ENCODE measurements at regions of chr14 and their contacts with region 1.

Region 1: DNA sequence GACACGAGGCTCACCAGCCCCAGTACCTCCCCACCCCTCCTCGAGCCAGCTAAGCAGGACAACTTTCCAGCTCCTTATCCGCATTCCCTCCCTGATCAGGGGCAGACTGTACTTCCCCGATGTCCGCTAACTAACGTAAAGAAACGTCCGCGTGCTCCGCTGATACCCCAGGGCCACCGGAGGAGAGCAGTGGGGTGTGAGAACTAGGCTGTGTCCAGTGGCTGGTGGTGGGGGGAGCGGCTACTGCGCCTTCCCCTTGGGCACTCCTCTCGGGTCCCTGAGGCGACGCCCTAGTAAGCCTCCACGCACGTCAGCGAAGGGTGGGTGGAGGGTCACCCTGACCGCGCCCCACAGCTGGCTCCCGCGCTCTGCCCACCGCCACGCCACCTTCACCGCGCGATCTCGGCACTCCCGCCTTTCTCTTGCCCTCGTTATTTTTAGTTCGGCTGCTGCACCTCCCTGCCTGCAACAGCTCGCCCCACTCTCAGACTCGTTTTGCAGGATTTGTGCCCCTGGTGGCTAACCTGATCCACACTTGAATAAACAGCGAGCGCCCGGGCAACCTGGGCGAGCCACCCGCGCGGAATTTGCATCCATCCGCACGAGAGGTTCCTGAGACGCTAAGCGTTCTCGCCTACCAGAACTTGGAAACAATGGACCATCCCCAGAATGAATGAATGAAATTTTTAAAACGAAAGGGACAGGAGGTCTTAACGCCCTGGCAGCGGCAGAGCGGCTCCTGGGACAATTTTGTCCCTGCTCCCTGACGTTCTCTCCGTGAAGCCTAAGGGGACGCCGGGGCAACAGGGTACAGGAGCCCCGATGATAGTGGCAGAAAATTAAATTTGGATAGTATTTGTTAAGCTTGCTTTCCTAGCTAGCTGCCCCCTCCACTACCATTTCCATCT is 6.9 kb upstream of the BMP4 start:
- DNase-seq: peak; percentile 34 to 53
- ATAC-seq: peak; percentile 93

Region 2: DNA sequence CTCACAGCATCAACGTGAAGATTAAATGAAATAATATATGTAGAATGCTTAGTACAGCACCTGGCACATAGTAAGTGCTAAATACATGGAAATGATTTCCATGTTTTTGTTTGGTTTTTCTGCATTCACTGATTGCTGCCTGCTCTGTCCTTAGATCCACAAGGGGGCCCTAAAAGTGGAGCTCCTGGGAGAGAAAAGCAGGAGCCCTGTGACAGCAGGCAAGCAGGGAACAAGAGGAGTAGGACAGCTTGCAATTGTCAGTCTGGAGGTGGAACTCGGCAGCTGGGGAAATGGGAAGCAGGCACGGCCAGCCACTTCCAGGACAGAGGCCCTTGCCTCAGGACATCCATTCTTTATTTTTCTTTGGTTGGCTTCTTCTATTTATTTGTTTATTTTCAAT is 299.9 kb before region 1 on chr14:
- intact Hi-C with region 1: no loop called
- DNase-seq: peak in 1 of 2 donors; percentile 6
- ATAC-seq: peak; percentile 45

Region 3: DNA sequence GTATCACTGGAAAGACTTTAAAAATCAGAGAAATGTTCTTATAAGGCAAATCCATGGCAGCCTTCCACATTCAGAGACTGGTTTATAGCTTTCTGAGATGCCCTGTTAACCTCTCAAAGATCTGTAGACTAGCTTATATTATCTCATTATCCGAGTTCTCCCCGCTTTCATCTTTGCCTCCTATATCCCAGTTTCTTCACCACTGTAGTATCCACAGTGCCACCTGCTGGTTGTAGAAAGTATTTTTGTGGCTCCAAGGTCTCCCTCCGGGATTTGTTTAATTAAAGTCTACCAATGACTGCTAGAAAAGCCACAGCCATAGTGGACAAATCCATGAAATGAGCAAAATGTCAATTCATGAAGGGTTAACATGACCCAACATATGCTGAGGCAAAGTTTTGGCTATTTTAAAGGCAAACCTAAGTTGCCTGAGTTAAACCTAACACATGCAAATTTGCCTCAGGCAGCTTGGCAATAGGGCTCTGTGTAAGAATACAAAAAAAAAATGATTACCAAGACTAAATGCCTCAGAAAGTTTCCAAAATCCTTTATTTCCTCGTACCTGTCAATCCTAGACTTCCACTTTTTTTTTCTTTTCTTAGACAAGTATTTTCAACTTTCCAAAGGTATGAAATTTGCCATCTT is 211.8 kb after region 1 on chr14:
- intact Hi-C with region 1: loop called in 1 of 2 experiments (anchors 10 kb)
- DNase-seq: peak; percentile 34 to 64
- ATAC-seq: peak; percentile 71

Measured in left colon (tissue), 2 donors.